Dendritic cell treated with granulocyte-macrophage colony-stimulating factor and Interleukin-4, amounts not matched to agents 40 ng/mL and 50 ng/mL, for 4 days (primary cell): ENCODE measurements at regions of chr14 and their contacts with region 1.

Region 1: GRCh38 chr14:63632932-63633514 is 8.6 kb downstream of the WDR89 start:
- H3K4me3 Mint-ChIP-seq: no peak overlapping the region
- H3K27ac Mint-ChIP-seq: no peak overlapping the region
- H3K4me1 Mint-ChIP-seq: peaks cover 14% of the 10 kb centered on the region
- H3K27me3 Mint-ChIP-seq: no peaks in the 10 kb centered on the region

Region 2: GRCh38 chr14:63770187-63770807 is 137.3 kb after region 1 on chr14:
- intact Hi-C with region 1: loop called (anchors 1 kb)
- H3K4me3 Mint-ChIP-seq: no peak overlapping the region
- H3K27ac Mint-ChIP-seq: no peak overlapping the region
- H3K4me1 Mint-ChIP-seq: peaks cover 10% of the 10 kb centered on the region
- H3K27me3 Mint-ChIP-seq: no peaks in the 10 kb centered on the region